Activated CD4-positive, alpha-beta T cell treated with anti-CD3 and anti-CD28 coated beads for 36 hours (primary cell): ENCODE measurements at regions of chr1 and their contacts with region 1.

Region 1: DNA sequence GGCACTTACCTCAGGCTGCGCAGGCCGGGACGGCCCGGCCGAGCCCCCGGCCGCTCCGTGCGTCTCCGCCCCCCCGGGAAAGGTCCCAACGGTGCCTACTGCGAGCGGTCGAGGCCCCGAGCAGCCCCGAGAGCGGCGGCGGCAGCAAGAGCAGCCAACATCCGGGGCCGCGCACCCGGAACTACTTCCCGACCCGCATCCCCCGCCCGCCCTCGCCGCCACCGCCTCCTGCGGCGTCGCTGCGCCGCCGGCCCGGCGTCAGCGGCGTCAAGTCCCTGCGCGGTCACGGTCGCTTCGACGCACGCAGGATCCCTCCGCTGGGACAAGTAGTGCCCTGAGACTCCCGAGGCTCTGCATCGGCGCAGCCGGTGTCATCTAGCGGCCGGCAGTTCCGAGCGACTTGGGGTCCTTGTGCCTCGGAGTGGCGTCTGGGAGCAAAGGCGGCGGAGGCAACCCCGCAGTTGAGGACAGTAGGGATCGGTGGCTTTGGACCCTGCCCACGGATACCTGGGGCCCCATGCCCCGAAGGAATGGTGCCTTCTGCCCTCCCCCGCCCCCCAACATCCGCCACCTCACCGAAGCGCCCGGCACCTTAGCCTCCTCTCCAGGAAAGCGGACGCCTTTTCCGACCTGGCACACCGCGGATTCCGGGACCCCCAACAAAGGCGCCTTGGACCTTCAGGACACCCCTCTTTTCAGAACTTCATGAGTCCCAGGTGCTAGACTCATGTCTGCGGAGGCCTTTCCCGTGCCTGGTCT is at the start of gene FOXJ3:
- DNase-seq: peak; percentile 97
- ATAC-seq: peak; percentile 89
- H3K4me3 Mint-ChIP-seq: peak within 1 kb of the TSS; percentile 92
- H3K27ac Mint-ChIP-seq: peak within 1 kb of the TSS; percentile 89
- H3K4me1 Mint-ChIP-seq: peaks cover 41% of the 10 kb centered on the region
- H3K27me3 Mint-ChIP-seq: no peaks in the 10 kb centered on the region
- total RNA-seq, gene FOXJ3: 44.1 to 54.0 TPM

Region 2: GRCh38 chr1:42035830-42036604 is 299.2 kb before region 1 on chr1:
- CTCF ChIA-PET with region 1: no interaction called
- POLR2A ChIA-PET with region 1: no interaction called
- intact Hi-C with region 1: loop called in 1 of 2 experiments (anchors 5 kb)
- DNase-seq: peak; percentile 99
- ATAC-seq: peak; percentile 92
- H3K4me3 Mint-ChIP-seq: peak overlapping the region; percentile 76
- H3K27ac Mint-ChIP-seq: peak overlapping the region; percentile 72
- H3K4me1 Mint-ChIP-seq: peaks cover 35% of the 10 kb centered on the region
- H3K27me3 Mint-ChIP-seq: no peaks in the 10 kb centered on the region

Region 3: GRCh38 chr1:42380586-42381279 is 45.5 kb after region 1 on chr1 and contains the start of gene RIMKLA:
- CTCF ChIA-PET with region 1: no interaction called
- POLR2A ChIA-PET with region 1: no interaction called
- intact Hi-C with region 1: loop called in 1 of 2 experiments (anchors 1 kb)
- DNase-seq: peak; percentile 74
- ATAC-seq: peak; percentile 92
- H3K4me3 Mint-ChIP-seq: peak within 1 kb of the TSS; percentile 70
- H3K27ac Mint-ChIP-seq: peak within 1 kb of the TSS; percentile 5
- H3K4me1 Mint-ChIP-seq: peaks cover 3% of the 10 kb centered on the region
- H3K27me3 Mint-ChIP-seq: peaks cover 37% of the 10 kb centered on the region
- total RNA-seq, gene RIMKLA: 6.7 to 8.9 TPM

Region 4: DNA sequence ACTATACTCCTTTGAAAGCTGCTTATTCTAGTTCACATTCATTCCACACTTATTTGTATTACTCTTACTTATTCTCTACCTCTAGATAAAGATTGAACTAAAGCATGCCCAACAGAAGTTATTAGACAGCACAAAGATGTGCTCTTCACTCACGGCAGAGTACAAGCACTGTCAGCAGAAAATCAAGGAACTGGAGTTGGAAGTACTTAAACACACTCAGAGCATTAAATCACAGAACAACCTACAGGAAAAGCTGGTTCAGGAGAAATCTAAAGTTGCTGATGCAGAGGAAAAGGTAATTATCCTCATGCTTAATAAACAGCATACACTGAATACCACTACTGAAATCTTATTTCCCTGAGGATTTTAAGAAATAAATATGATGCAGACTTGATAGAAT is 241.7 kb after region 1 on chr1:
- CTCF ChIA-PET with region 1: no interaction called
- POLR2A ChIA-PET with region 1: no interaction called
- intact Hi-C with region 1: loop called in 1 of 2 experiments (anchors 10 kb)
- DNase-seq: no peak
- ATAC-seq: no peak
- H3K4me3 Mint-ChIP-seq: no peak overlapping the region
- H3K27ac Mint-ChIP-seq: no peak overlapping the region
- H3K4me1 Mint-ChIP-seq: no peaks in the 10 kb centered on the region
- H3K27me3 Mint-ChIP-seq: no peaks in the 10 kb centered on the region

Region 5: GRCh38 chr1:42747125-42747524 is 411.9 kb after region 1 on chr1:
- CTCF ChIA-PET with region 1: no interaction called
- POLR2A ChIA-PET with region 1: no interaction called
- intact Hi-C with region 1: loop called in 1 of 2 experiments (anchors 5 kb)
- DNase-seq: peak; percentile 67
- ATAC-seq: peak; percentile 39
- H3K4me3 Mint-ChIP-seq: no peak overlapping the region
- H3K27ac Mint-ChIP-seq: no peak overlapping the region
- H3K4me1 Mint-ChIP-seq: no peaks in the 10 kb centered on the region
- H3K27me3 Mint-ChIP-seq: no peaks in the 10 kb centered on the region

Region 6: DNA sequence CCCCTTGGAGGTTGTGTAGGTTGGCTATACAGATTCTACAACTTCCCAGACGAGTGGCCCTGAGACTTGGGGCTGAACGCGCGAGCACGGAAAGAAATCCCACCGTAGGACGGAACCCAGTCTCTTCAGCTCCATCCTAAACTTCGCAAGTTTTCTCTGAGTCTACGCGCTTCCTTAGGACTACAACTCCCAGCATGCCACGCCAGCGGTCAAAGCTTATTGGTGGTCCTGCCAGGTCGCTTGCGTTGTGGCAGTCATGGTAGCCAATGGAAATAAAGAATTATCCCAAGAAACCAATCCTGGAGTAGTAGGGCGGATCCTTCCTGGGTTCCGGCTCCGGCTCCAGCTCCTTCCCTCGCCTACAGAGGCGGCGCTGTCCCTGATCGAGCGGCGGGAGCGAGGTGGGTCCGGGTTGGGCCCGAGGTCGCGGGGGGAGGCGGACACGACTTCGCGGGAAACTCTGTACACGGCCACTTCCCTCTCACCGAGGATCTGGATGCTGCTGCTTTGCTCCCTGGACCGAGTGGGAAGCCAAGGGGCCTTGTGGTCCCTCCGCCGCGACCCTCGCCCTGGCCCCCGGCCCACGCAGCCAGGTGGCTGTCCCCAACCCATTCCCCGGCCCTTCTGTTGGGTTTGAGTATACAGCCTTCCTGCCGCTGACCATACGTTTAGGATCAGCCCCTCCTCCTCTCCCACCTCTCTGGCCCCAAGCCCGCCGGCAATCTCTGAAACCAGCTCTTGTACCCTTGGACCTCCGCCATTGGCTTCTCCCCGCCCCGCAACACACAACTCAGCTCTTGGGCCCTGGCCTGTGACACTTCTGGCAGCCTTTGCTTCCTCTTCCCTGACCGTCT is 511.3 kb after region 1 on chr1 and contains the start of gene ZNF691:
- CTCF ChIA-PET with region 1: no interaction called
- POLR2A ChIA-PET with region 1: interaction called, 3 read pairs
- intact Hi-C with region 1: loop called in 1 of 2 experiments (anchors 10 kb)
- DNase-seq: peak; percentile 94
- ATAC-seq: peak; percentile 93
- H3K4me3 Mint-ChIP-seq: peak within 1 kb of the TSS; percentile 97
- H3K27ac Mint-ChIP-seq: peak within 1 kb of the TSS; percentile 89
- H3K4me1 Mint-ChIP-seq: peaks cover 34% of the 10 kb centered on the region
- H3K27me3 Mint-ChIP-seq: no peaks in the 10 kb centered on the region
- total RNA-seq, gene ZNF691: 10.5 to 11.7 TPM